Heart right ventricle (tissue), 16 donors: ENCODE measurements at regions of chr22 and their contacts with region 1.

Region 1: DNA sequence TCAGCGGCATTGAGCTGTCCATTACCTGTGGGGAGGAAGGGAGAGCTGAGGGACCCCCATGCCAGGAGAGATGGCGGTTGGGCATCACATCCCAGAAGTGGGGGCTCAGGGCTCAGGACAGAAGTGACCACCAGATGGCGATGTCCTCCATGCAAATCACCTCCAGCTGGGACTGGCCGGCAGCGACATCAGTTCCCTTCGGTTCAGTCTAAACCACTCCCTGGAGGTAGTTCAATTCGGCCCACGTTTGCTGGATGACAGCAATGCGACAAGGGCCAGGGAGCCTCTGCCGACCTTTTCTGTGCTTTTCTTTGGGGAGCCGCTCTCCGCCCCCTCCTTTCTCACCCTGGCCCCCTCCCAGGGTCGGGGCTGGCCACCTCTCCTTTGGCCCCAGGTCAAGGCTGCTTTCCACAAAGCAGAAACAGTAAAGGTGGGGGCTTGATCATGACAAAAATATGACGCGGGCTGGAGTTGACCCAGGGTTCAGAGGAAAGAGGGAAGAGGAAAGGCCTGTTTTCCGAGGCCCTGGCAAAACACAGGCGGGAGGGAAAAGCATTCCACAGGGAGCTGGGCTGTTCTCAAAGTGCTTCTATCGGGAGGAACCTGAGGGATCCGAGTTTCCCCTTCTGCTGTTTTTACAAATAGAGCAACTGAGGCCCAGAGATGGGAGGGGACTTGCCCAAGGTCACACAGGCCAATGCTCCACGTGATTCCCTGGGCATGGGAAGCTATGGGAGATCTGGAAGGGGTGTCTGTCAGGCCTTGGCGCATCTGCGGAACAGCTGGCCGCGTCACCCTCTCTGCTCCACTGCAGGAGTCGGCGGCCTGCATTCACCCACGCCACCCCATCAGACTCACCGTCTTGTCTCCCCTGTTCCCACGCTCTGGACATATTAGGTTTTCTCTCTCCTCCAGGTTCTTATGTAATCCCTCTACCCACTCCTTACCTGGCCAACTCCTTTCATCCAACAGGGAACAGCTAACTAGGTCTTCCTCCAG is 54.7 kb downstream of the FBXO7 start:
- DNase-seq: peak; percentile 85 to 92
- ATAC-seq: peak; percentile 66 to 77 (median 70)
- H3K4me3 ChIP-seq: peak overlapping the region in 1 of 10 donors; percentile 13
- H3K27ac ChIP-seq: peak overlapping the region; percentile 76 to 93 (median 82)
- H3K4me1 ChIP-seq: peaks cover 15 to 59% (median 49%) of the 10 kb centered on the region in 9 donors
- H3K27me3 ChIP-seq: no peaks in the 10 kb centered on the region
- CTCF ChIP-seq: peak; percentile 83 to 95 (median 90)

Region 2: DNA sequence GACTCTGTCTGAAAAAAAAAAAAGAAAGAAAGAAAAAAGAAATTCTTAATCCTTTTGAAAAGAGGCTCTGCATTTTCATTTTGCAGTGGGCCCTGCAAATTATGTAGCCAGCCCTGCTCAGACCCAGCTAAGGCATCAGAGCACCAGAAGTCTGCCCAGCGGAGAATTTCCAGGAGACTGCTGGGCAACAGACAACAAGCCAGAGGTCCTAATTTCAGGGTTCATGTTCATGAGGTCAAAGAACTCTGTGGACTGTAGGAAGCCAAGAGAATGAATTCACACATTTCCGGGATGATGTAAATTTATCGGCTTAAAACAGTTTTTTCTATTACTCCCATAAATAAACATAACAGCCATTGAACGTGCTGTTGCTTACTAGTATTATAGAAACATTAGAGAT is 102.4 kb before region 1 on chr22:
- intact Hi-C with region 1: no loop called
- DNase-seq: no peak
- ATAC-seq: no peak
- H3K4me3 ChIP-seq: no peak overlapping the region
- H3K27ac ChIP-seq: no peak overlapping the region
- H3K4me1 ChIP-seq: no peaks in the 10 kb centered on the region
- H3K27me3 ChIP-seq: peaks cover 0 to 38% (median 14%) of the 10 kb centered on the region in 7 donors
- CTCF ChIP-seq: no peak

Region 3: DNA sequence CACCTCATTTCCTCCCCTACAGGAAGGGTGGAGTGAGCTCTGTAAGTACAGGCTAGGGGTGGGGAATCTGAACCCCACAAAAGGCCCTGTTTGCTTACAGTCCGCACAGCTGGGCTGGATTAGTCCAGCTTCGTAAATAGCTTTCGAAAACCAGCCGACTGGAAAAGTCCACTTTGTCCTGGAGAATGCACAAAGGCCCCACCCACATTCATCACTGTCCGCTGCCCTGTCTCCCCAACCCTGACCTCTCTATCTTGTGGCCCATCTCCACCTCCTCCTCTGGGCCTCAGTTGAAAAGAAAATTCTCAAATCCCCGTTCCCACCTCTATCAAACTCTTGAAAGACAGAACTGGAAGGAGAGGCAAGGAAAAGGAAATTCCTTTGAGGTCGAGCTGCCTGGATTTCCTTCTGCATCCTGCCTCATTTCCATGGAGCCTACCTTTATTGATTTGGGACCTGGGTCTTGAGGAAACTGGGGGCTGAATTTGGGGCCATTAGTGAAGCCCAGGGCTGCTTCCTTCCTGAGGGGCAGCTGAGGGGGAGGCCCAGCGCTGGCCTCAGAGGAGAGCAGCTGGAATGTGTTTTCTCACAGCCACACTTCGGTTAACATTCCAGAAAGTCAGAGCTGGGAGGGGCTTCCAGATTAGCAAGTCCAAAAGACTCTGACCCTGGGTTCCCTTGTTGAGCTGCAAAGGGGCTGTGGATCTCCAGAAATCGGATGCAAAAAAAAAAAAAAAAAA is 92.9 kb after region 1 on chr22:
- intact Hi-C with region 1: loop called in 7 of 10 experiments (anchors 2 to 10 kb)
- DNase-seq: peak; percentile 50 to 67
- ATAC-seq: peak; percentile 51 to 79 (median 71)
- H3K4me3 ChIP-seq: no peak overlapping the region
- H3K27ac ChIP-seq: peak overlapping the region; percentile 67 to 93 (median 89)
- H3K4me1 ChIP-seq: peaks cover 36 to 90% (median 76%) of the 10 kb centered on the region in 9 donors
- H3K27me3 ChIP-seq: no peaks in the 10 kb centered on the region
- CTCF ChIP-seq: no peak

Region 4: GRCh38 chr22:32644252-32645100 is 115.2 kb after region 1 on chr22:
- intact Hi-C with region 1: loop called in 5 of 10 experiments (anchors 5 to 10 kb)
- DNase-seq: peak; percentile 65 to 80
- ATAC-seq: peak; percentile 86 to 95 (median 92)
- H3K4me3 ChIP-seq: no peak overlapping the region
- H3K27ac ChIP-seq: peak overlapping the region; percentile 34 to 90 (median 84)
- H3K4me1 ChIP-seq: peaks cover 0 to 19% (median 12%) of the 10 kb centered on the region in 9 donors
- H3K27me3 ChIP-seq: no peaks in the 10 kb centered on the region
- CTCF ChIP-seq: peak in 4 of 9 donors; percentile 13 to 44 (median 32)

Region 5: GRCh38 chr22:32660292-32660691 is 131.0 kb after region 1 on chr22:
- intact Hi-C with region 1: loop called in 7 of 10 experiments (anchors 2 to 10 kb)
- DNase-seq: peak; percentile 70 to 71
- ATAC-seq: peak; percentile 67 to 86 (median 72)
- H3K4me3 ChIP-seq: no peak overlapping the region
- H3K27ac ChIP-seq: peak overlapping the region in 2 of 10 donors; percentile 14 to 59
- H3K4me1 ChIP-seq: peaks cover 0 to 21% (median 7%) of the 10 kb centered on the region in 9 donors
- H3K27me3 ChIP-seq: no peaks in the 10 kb centered on the region
- CTCF ChIP-seq: peak; percentile 68 to 87 (median 80)

Region 6: DNA sequence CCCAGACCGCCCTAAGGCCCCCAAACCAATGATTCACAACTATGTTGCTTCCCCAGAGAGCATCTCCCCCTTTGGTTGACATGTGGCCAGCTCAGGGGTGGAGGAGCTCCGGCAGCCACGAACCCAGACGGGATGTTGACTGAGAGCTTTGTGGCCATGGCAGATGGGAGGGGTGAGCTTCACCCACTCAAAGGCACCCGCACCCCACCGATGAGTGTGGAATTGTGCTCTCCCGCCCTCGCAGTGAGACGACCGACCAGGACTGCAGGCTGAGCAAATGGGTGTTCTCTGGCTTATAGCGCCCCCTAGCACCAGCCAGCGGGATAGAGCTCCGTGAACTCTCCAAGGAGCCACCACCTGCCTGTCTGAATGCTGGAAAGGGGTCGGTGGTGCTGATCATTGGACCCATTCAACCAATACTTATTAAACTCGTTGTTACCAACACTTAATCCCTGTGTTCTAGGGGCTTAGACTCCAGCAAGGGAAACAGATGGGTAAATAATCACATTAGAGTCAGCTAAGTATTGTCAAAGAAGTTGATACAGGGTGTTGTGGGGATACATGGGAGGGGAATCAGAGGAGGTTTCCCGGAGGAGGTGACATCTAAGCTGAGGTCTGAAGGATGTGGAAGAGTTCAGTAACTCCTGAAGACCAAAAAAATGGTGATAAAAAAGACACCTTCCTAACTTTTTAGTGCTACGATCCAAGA is 267.7 kb after region 1 on chr22:
- intact Hi-C with region 1: loop called (anchors 1 to 5 kb)
- DNase-seq: peak; percentile 74 to 80
- ATAC-seq: peak; percentile 57 to 79 (median 70)
- H3K4me3 ChIP-seq: no peak overlapping the region
- H3K27ac ChIP-seq: peak overlapping the region in 6 of 10 donors; percentile 13 to 54 (median 37)
- H3K4me1 ChIP-seq: peaks cover 2 to 43% (median 22%) of the 10 kb centered on the region in 9 donors
- H3K27me3 ChIP-seq: peaks cover 0 to 18% (median 0%) of the 10 kb centered on the region in 7 donors
- CTCF ChIP-seq: peak; percentile 82 to 95 (median 92)

Region 7: DNA sequence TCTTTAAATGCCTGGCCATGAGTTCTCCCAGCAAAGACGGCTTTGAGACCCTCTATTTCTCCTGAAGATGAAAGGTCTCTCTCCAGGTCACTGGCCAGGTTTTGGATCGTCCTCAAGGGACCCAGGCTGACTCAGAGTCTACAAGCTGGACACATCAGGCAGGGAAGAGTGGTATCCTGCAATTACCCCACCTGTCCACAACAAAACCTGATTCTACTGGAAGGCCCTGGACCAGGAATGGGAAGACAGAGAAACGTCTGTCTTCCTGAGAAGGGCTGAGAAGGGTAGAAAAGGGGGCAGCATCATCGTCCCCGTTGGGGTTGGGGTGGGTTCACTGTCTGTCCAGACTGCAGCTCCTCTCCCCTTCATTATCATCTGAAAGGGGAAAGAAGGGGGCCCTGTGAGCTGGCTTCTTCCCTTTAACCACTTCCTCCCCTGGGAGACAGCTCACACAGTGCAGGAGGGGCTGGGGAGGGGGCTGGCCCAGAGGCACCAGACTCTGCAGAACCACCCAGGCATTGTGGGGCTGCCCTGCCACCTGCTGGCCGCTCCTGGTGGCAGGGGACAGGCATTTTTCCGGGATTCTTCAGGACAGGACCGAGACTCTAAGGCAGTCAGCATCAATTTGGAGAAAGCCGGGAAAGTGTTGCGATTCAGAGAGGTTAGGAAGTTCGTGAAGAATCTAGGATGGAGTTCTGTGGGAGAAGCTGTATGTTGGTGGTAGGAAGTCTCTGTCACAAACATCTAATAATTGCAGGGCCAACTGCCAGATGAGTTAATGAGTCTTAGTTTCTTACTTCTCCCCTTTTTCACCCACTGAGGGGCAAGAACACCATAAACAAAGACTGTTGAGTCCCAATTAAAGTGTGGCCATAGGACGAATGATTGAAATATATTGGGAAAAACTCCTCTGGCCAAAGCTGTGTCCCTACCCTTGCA is 471.3 kb after region 1 on chr22:
- intact Hi-C with region 1: loop called (anchors 1 to 5 kb)
- DNase-seq: peak; percentile 47 to 74
- ATAC-seq: peak; percentile 71 to 87 (median 82)
- H3K4me3 ChIP-seq: no peak overlapping the region
- H3K27ac ChIP-seq: no peak overlapping the region
- H3K4me1 ChIP-seq: peaks cover 0 to 12% (median 5%) of the 10 kb centered on the region in 9 donors
- H3K27me3 ChIP-seq: peaks cover 0 to 4% (median 0%) of the 10 kb centered on the region in 7 donors
- CTCF ChIP-seq: peak; percentile 91 to 97 (median 93)